Activated T-helper 1 cell treated with anti-CD3 and anti-CD28 coated beads, Interleukin-12 subunit alpha, Interleukin-12 subunit beta, Interleukin-2, Interleukin-4 antibody, amounts not matched to agents 30 ng/mL and 10 ng/mL and 1 ng/mL, durations not matched to agents 14 hours and 24 hours and 36 hours (primary cell): ENCODE measurements at regions of chr21 and their contacts with region 1.

Region 1: GRCh38 chr21:44657635-44658540 is at the start of gene KRTAP12-3:
- DNase-seq: peak; percentile 52
- H3K4me3 Mint-ChIP-seq: peak within 1 kb of the TSS; percentile 47
- H3K27ac Mint-ChIP-seq: peak within 1 kb of the TSS; percentile 95
- H3K4me1 Mint-ChIP-seq: peaks cover 63% of the 10 kb centered on the region
- H3K27me3 Mint-ChIP-seq: peaks cover 6% of the 10 kb centered on the region
- total RNA-seq, gene KRTAP12-3: not detected in 2 replicates

Region 2: GRCh38 chr21:44428281-44428942 is 229.5 kb before region 1 on chr21:
- intact Hi-C with region 1: loop called (anchors 5 kb)
- DNase-seq: peak; percentile 49
- H3K4me3 Mint-ChIP-seq: no peak overlapping the region
- H3K27ac Mint-ChIP-seq: no peak overlapping the region
- H3K4me1 Mint-ChIP-seq: no peaks in the 10 kb centered on the region
- H3K27me3 Mint-ChIP-seq: no peaks in the 10 kb centered on the region

Region 3: GRCh38 chr21:44618504-44618903 is 39.4 kb before region 1 on chr21:
- intact Hi-C with region 1: loop called (anchors 5 kb)
- DNase-seq: no peak
- H3K4me3 Mint-ChIP-seq: peak overlapping the region; percentile 50
- H3K27ac Mint-ChIP-seq: peak overlapping the region; percentile 86
- H3K4me1 Mint-ChIP-seq: peaks cover 27% of the 10 kb centered on the region
- H3K27me3 Mint-ChIP-seq: no peaks in the 10 kb centered on the region